Sigmoid colon (tissue), 7 donors: ENCODE measurements at regions of chr5 and their contacts with region 1.

Region 1: DNA sequence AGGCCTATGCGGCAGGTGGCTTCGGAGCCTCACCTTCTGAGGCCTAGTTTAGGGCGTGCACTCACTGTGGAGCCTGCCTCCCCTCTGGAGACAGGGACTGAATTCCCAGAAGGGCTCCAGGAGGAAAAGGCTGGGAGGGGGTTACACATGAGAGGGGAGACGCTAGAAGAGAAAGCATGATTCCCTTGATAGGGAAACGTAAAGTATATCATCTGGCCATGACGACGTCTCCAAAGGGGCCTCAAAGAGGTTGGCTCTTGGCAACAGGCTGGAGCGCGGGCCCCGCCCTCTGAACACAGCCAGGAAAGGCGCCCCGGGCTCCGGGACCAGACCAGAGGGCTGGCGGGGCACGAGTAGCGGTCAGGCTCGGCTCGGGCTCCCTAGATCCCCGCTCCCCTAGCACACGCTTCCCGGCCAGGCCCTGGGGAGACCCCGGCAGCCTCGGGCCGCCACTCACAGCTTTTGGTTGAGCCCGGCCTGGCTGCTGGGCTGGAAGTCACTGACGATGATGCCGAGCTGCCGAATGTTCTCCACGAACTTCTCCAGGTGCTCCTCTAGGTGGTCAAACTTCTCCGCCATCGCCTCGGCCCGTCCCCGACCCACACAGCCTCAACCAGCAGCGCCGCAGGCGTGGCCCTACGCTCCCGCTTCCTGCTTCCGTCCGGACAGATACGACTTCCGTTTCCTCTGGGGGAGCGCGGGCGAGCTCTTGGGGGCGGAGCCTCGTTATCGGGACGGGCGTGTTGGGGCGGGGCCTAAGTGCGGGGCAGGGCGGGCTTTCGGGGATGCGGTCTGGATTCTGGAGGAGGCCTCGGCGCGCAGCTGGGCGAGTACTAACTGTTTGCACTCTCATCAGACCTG is at the start of gene MED10:
- DNase-seq: peak; percentile 98
- H3K4me3 ChIP-seq: peak within 1 kb of the TSS; percentile 92 to 96 (median 94)
- H3K27ac ChIP-seq: peak within 1 kb of the TSS; percentile 89 to 94 (median 92)
- H3K4me1 ChIP-seq: peaks cover 0 to 21% (median 19%) of the 10 kb centered on the region in 4 donors
- H3K27me3 ChIP-seq: no peaks in the 10 kb centered on the region
- CTCF ChIP-seq: no peak
- EP300 ChIP-seq: no peak
- POLR2A ChIP-seq: peak; percentile 68 to 69
- total RNA-seq, gene MED10: 29.2 to 67.6 (median 37.3) TPM

Region 2: GRCh38 chr5:5492087-5492933 is 885.8 kb before region 1 on chr5:
- intact Hi-C with region 1: loop called (anchors 5 kb)
- DNase-seq: no peak
- H3K4me3 ChIP-seq: no peak overlapping the region
- H3K27ac ChIP-seq: no peak overlapping the region
- H3K4me1 ChIP-seq: peaks cover 0 to 17% (median 15%) of the 10 kb centered on the region in 4 donors
- H3K27me3 ChIP-seq: no peaks in the 10 kb centered on the region
- CTCF ChIP-seq: peak; percentile 37 to 67 (median 54)
- EP300 ChIP-seq: no peak
- POLR2A ChIP-seq: no peak

Region 3: DNA sequence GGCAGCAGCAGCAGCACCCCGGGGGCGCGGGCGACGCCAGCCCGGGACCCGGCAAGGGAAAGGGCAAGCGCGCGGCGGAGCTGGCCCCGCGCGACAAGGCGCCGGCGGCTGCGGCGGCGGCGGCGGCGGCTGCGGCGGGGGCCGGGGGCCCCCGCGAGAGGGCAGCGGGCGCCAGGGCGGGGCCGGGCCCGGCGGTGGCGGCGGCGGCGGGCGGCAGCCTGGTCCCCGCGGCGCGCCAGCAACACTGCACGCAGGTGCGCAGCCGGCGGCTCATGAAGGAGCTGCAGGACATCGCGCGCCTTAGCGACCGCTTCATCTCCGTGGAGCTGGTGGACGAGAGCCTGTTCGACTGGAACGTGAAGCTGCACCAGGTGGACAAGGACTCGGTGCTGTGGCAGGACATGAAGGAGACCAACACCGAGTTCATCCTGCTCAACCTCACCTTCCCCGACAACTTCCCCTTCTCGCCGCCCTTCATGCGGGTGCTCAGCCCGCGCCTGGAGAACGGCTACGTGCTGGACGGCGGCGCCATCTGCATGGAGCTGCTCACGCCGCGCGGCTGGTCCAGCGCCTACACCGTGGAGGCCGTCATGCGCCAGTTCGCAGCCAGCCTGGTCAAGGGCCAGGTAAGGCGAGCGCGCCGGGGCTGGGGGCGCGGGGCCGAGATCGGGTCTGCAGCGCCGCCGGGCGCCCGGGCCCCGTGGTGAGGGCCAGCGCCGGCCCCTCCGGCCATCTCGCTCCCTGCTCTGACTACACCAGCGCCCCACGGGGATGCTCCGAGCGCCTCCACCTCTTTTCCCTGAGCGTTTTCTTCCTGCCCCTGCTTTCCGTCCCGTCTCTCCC is 70.7 kb after region 1 on chr5 and contains the start of gene UBE2QL1:
- intact Hi-C with region 1: loop called (anchors 2 kb)
- DNase-seq: no peak
- H3K4me3 ChIP-seq: peak within 1 kb of the TSS; percentile 33 to 68 (median 57)
- H3K27ac ChIP-seq: peak within 1 kb of the TSS in 3 of 4 donors; percentile 60 to 76 (median 74)
- H3K4me1 ChIP-seq: peaks cover 0 to 39% (median 27%) of the 10 kb centered on the region in 4 donors
- H3K27me3 ChIP-seq: peaks cover 0 to under 1% (median 0%) of the 10 kb centered on the region in 3 donors
- CTCF ChIP-seq: no peak
- EP300 ChIP-seq: no peak
- POLR2A ChIP-seq: no peak
- total RNA-seq, gene UBE2QL1: 3.6 to 5.5 (median 5.0) TPM

Region 4: GRCh38 chr5:6574537-6574936 is 196.4 kb after region 1 on chr5:
- intact Hi-C with region 1: no loop called
- DNase-seq: no peak
- H3K4me3 ChIP-seq: no peak overlapping the region
- H3K27ac ChIP-seq: no peak overlapping the region
- H3K4me1 ChIP-seq: no peaks in the 10 kb centered on the region
- H3K27me3 ChIP-seq: no peaks in the 10 kb centered on the region
- CTCF ChIP-seq: no peak
- EP300 ChIP-seq: no peak
- POLR2A ChIP-seq: no peak

Region 5: DNA sequence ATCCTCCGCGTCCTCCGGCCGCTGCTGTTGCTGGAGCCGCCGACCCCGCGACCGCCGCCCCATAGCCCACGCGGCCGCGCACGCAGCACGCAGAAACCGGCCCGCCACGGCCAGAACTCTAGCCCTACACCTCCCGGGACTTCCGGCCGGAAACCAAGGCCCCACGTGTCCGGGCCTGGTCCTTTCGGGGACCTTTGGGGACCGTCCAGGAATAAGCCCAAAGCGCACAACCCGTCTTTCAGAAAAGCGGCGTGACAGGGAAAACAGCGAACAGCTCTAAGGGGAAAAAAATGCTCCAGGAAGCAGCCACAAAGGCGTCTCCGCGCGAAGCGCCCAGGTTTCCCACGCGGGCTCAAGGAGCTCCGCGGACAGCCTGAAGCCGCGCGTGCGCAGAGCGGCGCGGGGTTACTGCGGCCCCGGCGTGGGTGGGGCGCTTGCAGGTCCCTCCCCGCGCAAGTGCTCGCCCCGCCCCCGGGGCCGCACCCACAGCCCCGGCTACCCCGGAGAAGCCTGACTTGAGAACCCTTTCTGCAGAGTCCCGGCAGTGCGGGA is 254.9 kb after region 1 on chr5 and contains the starts of genes NSUN2 and SRD5A1:
- intact Hi-C with region 1: loop called (anchors 2 kb)
- DNase-seq: peak; percentile 95
- H3K4me3 ChIP-seq: peak within 1 kb of the TSS; percentile 77 to 90 (median 82)
- H3K27ac ChIP-seq: peak within 1 kb of the TSS; percentile 86 to 96 (median 88)
- H3K4me1 ChIP-seq: peaks cover 0 to 37% (median 30%) of the 10 kb centered on the region in 4 donors
- H3K27me3 ChIP-seq: no peaks in the 10 kb centered on the region
- CTCF ChIP-seq: no peak
- EP300 ChIP-seq: no peak
- POLR2A ChIP-seq: peak; percentile 40 to 41
- total RNA-seq, gene NSUN2: 29.3 to 45.4 (median 31.2) TPM
- total RNA-seq, gene SRD5A1: 3.1 to 5.7 (median 3.6) TPM